ENCODE measurements at regions of chr11 and their contacts with region 1.

Region 1: GRCh38 chr11:118198370-118198769 is 21.9 kb upstream of the SCN2B start:
- DNase-seq: peak; percentile 93
- H3K4me3 ChIP-seq: peak overlapping the region in 1 of 8 donors; percentile 38
- H3K27ac ChIP-seq: peak overlapping the region in 2 of 8 donors; percentile 35 to 66
- H3K4me1 ChIP-seq: peaks cover 3 to 40% (median 21%) of the 10 kb centered on the region in 6 donors
- H3K27me3 ChIP-seq: no peaks in the 10 kb centered on the region
- CTCF ChIP-seq: peak; percentile 69 to 90 (median 84)
- POLR2A ChIP-seq: no peak

Region 2: DNA sequence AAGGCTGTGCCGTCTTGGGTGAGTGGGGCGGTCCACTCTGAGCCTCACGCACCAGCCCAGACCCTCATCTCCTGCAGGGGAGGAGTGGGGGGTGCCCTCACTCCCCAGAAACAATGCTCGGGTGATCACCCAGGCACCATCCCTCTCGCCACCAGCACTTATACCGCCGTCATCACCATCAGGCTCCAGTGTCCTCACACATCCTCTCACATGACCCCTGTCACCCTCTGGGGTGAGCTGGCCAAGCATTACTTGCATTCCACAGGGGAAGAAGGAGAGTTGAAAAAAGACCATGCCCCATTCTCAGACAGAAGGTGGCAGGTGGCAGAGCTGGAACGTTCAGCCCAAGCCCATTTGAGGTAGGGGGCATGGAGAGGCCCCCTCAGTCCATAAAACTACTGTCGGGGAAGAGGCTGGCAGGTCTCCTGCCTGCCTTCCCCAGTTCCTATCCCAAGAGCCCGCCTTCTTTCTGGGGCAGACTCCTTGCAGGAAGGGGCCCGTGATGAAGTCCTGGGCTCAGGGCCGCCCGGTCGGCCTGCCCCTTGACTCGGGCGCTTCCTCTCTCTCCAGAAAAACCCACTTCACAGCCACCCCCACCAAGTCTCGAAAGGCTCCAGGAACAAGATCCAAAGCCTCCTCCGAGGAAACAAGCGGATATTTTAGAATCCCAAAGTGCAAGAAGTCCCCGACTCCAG is 554.6 kb before region 1 on chr11:
- intact Hi-C with region 1: no loop called
- DNase-seq: peak; percentile 24
- H3K4me3 ChIP-seq: no peak overlapping the region
- H3K27ac ChIP-seq: no peak overlapping the region
- H3K4me1 ChIP-seq: no peaks in the 10 kb centered on the region
- H3K27me3 ChIP-seq: peaks cover 0 to 16% (median 0%) of the 10 kb centered on the region in 7 donors
- CTCF ChIP-seq: no peak
- POLR2A ChIP-seq: no peak

Region 3: DNA sequence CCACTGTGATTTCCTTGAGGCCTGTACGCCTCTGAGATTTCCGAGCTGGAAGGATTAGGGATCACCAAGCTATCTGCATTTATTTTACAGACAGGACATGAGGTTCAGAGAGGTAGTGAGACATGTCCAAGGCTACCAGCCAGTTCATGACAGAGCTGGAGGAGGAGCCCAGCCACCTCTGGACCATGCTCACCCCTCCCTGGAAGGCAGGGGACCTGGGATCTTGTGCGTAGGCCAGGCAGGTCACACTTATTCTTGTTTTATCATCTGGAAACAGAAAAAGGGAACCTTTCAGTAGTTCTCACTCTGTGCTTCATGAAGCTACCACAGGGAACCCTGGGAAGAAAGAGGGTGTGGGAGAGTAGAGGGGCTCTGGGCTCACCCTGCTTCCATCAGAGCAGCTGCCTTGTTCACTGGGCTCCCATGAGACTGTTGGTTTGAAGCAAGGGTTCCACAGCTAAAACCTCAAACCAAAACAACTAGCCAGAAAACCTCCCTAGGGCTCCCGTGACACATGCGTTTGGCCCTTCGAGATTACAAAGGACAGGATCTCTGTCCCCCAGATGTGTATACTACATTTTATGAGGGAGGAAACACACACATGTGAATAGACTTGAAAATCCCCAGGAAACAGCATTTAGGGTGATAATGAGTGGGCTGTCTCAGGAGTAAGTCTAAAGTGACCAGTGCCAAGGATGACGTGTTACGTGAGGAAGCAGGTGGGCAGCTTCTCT is 507.7 kb before region 1 on chr11:
- intact Hi-C with region 1: no loop called
- DNase-seq: no peak
- H3K4me3 ChIP-seq: no peak overlapping the region
- H3K27ac ChIP-seq: no peak overlapping the region
- H3K4me1 ChIP-seq: no peaks in the 10 kb centered on the region
- H3K27me3 ChIP-seq: no peaks in the 10 kb centered on the region
- CTCF ChIP-seq: no peak
- POLR2A ChIP-seq: no peak

Region 4: GRCh38 chr11:118290923-118291322 is 92.6 kb after region 1 on chr11:
- intact Hi-C with region 1: loop called (anchors 5 kb)
- DNase-seq: no peak
- H3K4me3 ChIP-seq: no peak overlapping the region
- H3K27ac ChIP-seq: peak overlapping the region in 2 of 8 donors; percentile 46 to 53
- H3K4me1 ChIP-seq: peaks cover 0 to 16% (median 7%) of the 10 kb centered on the region in 6 donors
- H3K27me3 ChIP-seq: peaks cover 0 to 11% (median 0%) of the 10 kb centered on the region in 7 donors
- CTCF ChIP-seq: peak in 9 of 11 experiments; percentile 16 to 62 (median 52)
- POLR2A ChIP-seq: no peak

Region 5: DNA sequence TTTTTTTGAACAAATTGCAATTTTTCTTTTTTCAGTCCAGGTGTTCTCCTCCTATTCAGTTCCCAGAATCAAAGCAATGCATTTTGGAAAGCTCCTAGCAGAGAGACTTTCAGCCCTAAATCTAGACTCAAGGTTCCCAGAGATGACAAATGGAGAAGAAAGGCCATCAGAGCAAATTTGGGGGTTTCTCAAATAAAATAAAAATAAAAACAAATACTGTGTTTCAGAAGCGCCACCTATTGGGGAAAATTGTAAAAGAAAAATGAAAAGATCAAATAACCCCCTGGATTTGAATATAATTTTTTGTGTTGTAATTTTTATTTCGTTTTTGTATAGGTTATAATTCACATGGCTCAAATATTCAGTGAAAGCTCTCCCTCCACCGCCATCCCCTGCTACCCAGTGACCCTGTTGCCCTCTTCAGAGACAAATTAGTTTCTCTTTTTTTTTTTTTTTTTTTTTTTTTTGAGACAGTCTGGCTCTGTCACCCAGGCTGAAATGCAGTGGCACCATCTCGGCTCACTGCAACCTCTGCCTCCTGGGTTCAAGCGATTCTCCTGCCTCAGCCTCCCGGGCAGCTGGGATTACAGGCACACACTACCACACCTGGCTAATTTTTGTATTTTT is 154.8 kb after region 1 on chr11:
- intact Hi-C with region 1: loop called (anchors 5 kb)
- DNase-seq: no peak
- H3K4me3 ChIP-seq: no peak overlapping the region
- H3K27ac ChIP-seq: no peak overlapping the region
- H3K4me1 ChIP-seq: peaks cover 0 to 10% (median 0%) of the 10 kb centered on the region in 6 donors
- H3K27me3 ChIP-seq: no peaks in the 10 kb centered on the region
- CTCF ChIP-seq: peak; percentile 11 to 65 (median 47)
- POLR2A ChIP-seq: no peak

Region 6: GRCh38 chr11:118488480-118489109 is 290.2 kb after region 1 on chr11:
- intact Hi-C with region 1: loop called (anchors 5 kb)
- DNase-seq: peak; percentile 85
- H3K4me3 ChIP-seq: no peak overlapping the region
- H3K27ac ChIP-seq: no peak overlapping the region
- H3K4me1 ChIP-seq: peaks cover 0 to 9% (median 0%) of the 10 kb centered on the region in 6 donors
- H3K27me3 ChIP-seq: no peaks in the 10 kb centered on the region
- CTCF ChIP-seq: peak; percentile 50 to 83 (median 78)
- POLR2A ChIP-seq: no peak